GM10248 (cell line): ENCODE measurements at regions of chr19 and their contacts with region 1.

Region 1: GRCh38 chr19:5987077-5987818 is 9.3 kb upstream of the RANBP3 start:
- DNase-seq: peak; percentile 79
- CTCF ChIP-seq: peak; percentile 94

Region 2: GRCh38 chr19:6005321-6006069 is 18.2 kb after region 1 on chr19:
- CTCF ChIA-PET with region 1: interaction called, 16 read pairs
- POLR2A ChIA-PET with region 1: no interaction called
- DNase-seq: no peak
- CTCF ChIP-seq: no peak